ENCODE measurements at regions of chr9 and their contacts with region 1.

Region 1: DNA sequence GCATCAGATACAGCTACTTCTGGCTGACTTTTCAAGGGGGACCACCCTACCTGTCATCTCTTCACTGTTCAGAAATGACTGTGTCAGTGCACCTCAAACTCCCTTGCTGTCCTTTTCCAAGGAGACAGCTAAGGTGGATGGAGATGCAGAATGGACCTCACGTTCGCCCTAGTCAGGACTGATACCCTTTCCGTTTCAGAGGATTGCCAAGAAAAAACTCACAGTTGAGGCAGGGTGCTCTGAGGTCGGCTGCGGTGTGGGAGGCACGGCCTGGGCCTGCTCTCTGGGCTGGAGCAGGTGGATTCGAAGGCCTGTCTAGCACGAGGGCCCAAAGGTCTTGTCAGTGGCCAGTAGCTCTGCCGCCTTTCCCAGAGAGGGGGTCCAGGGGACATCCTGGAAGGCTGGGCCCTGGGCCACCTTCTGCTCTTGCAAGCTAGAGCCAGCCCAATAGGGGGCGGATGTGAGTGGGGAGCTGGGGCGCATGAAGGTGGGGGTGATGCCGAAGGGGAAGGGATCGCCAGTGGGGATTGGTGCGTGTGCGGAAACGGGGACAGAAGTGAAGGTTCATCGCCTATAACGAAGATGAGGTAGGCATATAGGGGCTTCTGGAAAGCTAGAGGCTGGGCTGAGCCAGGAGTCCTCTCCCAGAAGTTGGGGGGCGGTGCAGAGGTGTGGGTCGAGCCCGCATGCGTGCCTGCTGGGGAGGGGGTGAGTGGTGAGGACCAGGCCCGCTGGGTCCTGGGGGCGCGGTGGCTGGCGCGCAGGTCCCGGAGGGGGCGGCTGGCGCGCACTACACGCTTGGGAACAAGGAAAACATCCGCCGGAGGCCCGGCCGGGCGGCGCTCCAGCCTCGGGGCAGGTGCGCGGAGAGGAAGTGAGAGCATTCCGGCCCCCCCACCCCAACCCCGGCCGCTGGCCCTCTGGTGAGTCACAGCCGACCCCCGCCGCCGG is 2.5 kb upstream of the MSMP start:
- DNase-seq: peak; percentile 81 to 88 (median 86)
- H3K4me3 ChIP-seq: peak overlapping the region; percentile 71 to 93 (median 79)
- H3K27ac ChIP-seq: peak overlapping the region; percentile 92 to 97
- H3K4me1 ChIP-seq: peaks cover 29 to 65% (median 47%) of the 10 kb centered on the region in 4 experiments
- H3K27me3 ChIP-seq: no peaks in the 10 kb centered on the region

Region 2: DNA sequence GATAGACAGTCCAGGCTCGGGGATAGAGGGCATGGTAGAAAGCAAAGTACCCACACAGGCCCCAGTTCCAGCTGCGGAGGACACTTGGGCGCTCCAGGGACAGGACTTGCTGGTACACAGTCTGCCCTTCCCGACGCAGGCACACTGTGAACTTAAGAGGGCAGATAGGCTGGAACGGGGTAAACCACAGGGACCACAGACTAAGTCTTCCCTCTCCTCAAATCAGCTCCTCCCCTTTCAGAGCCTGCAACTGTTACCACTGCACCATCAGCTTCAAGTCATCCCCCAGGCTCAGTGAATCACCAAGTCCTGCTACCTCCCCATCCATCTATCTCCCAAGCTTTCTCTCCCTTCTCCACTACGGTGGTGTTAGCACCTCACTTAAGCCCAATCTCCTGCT is 14.8 kb before region 1 on chr9:
- CTCF ChIA-PET with region 1: interaction called, 39 read pairs
- POLR2A ChIA-PET with region 1: no interaction called
- DNase-seq: peak; percentile 39 to 70 (median 64)
- H3K4me3 ChIP-seq: no peak overlapping the region
- H3K27ac ChIP-seq: no peak overlapping the region
- H3K4me1 ChIP-seq: peaks cover 0 to 25% (median 8%) of the 10 kb centered on the region in 4 experiments
- H3K27me3 ChIP-seq: no peaks in the 10 kb centered on the region

Region 3: DNA sequence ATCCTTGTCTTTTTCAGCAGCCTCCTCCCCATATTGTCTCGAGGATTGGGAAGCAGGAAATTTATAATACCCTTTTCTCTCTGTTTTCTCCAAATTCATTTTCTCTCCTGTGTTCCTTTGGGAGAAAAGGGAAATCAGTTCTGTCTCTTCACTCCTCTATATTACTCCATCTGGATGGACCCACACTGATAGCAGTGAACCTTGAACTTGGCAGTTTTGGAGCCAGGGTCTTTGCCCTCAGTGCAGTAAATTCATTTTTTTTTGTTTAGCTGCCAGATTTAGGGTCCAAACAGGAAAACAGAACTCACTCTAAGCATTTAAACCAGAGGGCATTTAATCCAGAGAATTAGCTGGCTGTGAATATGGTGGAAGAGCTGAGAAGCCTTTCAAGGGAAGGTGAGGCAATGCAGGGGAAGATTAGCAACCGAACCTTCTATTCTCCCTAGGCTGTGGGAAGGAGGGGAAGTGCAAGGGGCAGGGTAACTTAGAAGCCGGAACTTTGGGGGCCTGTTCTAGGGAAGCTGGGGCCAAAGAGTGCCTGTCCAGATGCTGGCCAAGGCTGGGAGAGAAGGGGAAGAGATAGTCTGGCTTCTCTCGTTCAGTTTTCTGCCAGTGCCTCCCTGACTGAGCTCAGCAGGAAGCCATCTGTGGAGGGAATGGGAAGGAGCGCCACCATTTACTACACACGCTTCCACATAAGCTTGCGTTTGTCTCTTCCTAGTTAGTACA is 18.5 kb after region 1 on chr9:
- CTCF ChIA-PET with region 1: interaction called, 41 read pairs
- POLR2A ChIA-PET with region 1: interaction called, 4 read pairs
- DNase-seq: peak in 1 of 3 donors; percentile 26
- H3K4me3 ChIP-seq: peak overlapping the region in 5 of 7 experiments; percentile 19 to 61 (median 51)
- H3K27ac ChIP-seq: peak overlapping the region; percentile 23 to 77
- H3K4me1 ChIP-seq: peaks cover 13 to 35% (median 17%) of the 10 kb centered on the region in 4 experiments
- H3K27me3 ChIP-seq: no peaks in the 10 kb centered on the region